ENCODE measurements at regions of chr10 and their contacts with region 1.

Region 1: DNA sequence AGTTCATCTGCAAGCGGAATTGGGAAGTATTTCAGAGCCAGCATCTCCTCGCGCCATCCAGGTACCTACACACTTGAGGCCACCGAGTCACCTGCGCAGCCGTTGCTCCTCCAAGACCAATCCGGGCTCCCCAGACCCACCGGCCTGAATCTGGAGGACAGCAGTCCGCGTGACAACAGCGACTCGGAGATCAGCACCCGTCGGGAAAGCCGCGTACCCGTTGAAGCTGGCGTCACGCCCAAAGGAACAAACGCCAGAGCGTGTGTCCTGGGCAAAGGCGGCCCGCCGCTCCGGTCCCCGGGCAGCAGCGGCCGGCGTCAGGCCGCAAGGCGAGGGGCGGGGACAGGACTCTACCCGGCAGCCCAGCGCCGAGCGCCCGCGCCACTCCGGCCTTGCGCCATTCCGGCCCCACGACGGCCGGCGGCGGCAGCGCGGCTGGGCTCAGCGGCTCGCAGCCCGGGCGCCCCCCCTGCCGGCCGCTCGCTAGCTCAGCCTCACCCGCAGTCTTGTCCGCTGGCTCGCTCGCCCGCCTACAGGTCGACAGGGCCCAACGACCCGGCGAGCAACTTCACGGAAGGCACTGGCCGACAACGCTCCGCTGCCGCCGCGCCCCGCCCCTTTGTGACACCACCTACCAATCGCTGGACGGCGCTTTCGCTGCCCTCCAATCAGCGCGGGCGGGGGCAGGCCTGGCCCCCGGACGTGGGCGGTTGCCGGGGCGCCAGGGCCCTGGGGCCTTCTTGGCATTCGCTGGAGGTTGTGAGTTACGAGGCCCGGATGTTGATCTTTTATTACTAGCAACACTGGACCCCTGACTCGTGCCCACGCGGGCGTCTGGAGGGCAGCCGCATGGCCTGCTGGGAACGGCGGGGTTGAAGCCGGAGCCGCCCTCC is at the start of gene ZFAND4:
- ATAC-seq: peak; percentile 93 to 98 (median 96)
- H3K4me3 ChIP-seq: peak within 1 kb of the TSS; percentile 54 to 78 (median 60)
- H3K27ac ChIP-seq: peak within 1 kb of the TSS; percentile 30 to 83
- H3K4me1 ChIP-seq: no peaks in the 10 kb centered on the region
- total RNA-seq, gene ZFAND4: 5.1 to 14.4 (median 9.0) TPM

Region 2: DNA sequence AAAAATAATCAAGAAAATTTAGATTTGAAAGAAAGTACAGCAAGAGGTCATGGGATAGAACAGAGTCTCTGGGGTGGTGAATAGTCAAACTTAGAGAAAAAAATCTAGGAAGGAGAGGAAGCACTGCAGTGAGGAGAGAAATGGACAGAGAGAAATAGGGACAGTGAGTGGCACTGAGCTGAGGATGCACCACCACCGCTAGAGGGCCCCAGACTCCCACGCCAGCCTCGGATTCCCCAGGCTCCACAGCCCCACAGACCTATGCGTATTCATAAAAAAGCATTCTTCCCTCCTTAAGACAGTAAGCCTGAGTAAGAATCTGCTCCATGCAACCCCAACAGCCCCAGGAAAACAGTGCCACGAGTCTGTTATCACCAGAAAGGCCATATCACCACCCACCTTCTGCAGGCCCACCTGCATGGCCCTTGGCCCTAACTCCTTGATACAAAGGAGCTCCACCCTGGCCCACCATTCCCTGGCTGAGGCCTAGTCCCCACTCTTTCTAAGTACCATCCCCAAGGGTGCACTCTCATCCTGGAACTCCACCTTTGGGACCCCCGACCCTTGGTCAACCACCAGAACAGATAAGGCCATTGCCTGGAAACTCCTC is 207.4 kb before region 1 on chr10:
- in situ Hi-C with region 1: loop called in 3 of 9 experiments (anchors 10 to 25 kb)
- ATAC-seq: peak; percentile 99 to 100 (median 100)
- H3K4me3 ChIP-seq: no peak overlapping the region
- H3K27ac ChIP-seq: no peak overlapping the region
- H3K4me1 ChIP-seq: peaks cover 3 to 5% of the 10 kb centered on the region in 2 donors

Region 3: GRCh38 chr10:45594276-45595106 is 77.9 kb before region 1 on chr10:
- in situ Hi-C with region 1: no loop called
- ATAC-seq: peak; percentile 92 to 97 (median 96)
- H3K4me3 ChIP-seq: peak overlapping the region; percentile 48 to 97 (median 71)
- H3K27ac ChIP-seq: peak overlapping the region in 1 of 2 donors; percentile 42
- H3K4me1 ChIP-seq: peaks cover 3 to 12% of the 10 kb centered on the region in 2 donors

Measured in motor neuron (in vitro differentiated cells).